Mammary epithelial cell (primary cell): ENCODE measurements at regions of chr6 and their contacts with region 1.

Region 1: DNA sequence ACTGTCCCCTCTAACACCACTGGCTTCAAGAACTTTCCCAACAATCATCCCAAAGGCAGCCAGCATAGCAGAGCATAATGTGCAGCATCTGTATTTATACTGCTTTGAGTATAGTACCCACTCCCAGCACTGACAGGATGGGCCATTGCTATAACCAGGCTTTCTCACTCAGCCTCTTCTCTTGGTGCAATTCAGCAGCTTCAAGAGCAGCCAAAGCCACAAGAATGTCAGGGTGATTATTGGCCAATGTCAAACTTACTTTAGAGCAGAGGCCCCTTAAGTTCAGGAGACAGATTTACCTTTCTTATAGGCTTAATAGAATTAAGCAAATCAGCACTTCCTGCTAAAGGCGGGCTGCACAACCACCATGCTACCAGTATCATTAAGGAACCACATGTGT is 232.4 kb upstream of the RSPO3 start:
- DNase-seq: no peak
- H3K4me3 ChIP-seq: no peak overlapping the region
- H3K27ac ChIP-seq: no peak overlapping the region
- H3K4me1 ChIP-seq: no peaks in the 10 kb centered on the region
- H3K27me3 ChIP-seq: peaks cover 5% of the 10 kb centered on the region
- CTCF ChIP-seq: no peak

Region 2: DNA sequence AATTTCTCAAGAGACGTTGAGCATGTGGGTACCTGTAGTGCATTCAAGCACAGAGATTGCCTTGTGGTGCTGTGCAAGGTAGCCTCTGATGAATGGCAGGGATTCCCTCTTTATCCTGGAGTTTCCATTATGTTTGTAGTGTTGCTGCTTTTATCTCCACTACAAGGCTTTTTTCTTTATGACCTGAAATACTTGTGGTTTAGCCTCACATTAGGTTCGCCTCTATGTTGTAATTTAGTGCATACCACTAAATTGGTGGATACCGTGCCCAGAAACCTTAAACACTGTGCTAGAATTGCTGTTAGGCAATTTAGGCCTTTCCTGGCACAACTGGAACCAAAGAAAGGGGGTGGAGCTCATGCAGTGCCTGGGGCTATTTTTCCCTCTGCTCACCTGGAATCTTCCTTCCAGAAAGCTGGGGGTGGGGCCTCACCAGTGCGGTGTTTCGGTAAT is 1018.6 kb before region 1 on chr6:
- CTCF ChIA-PET with region 1: no interaction called
- dilution Hi-C with region 1: no loop called
- in situ Hi-C with region 1: no loop called
- intact Hi-C with region 1: no loop called
- DNase-seq: peak; percentile 99
- H3K4me3 ChIP-seq: peak overlapping the region in 1 of 3 experiments; percentile 21
- H3K27ac ChIP-seq: peak overlapping the region; percentile 90
- H3K4me1 ChIP-seq: peaks cover 26% of the 10 kb centered on the region
- H3K27me3 ChIP-seq: no peaks in the 10 kb centered on the region
- CTCF ChIP-seq: no peak

Region 3: GRCh38 chr6:126824226-126824625 is 61.9 kb before region 1 on chr6:
- CTCF ChIA-PET with region 1: no interaction called
- dilution Hi-C with region 1: loop called (anchors 10 kb)
- in situ Hi-C with region 1: no loop called
- intact Hi-C with region 1: no loop called
- DNase-seq: no peak
- H3K4me3 ChIP-seq: no peak overlapping the region
- H3K27ac ChIP-seq: no peak overlapping the region
- H3K4me1 ChIP-seq: no peaks in the 10 kb centered on the region
- H3K27me3 ChIP-seq: peaks cover 2% of the 10 kb centered on the region
- CTCF ChIP-seq: no peak

Region 4: GRCh38 chr6:126897758-126898157 is 11.7 kb after region 1 on chr6:
- CTCF ChIA-PET with region 1: no interaction called
- dilution Hi-C with region 1: no loop called
- in situ Hi-C with region 1: no loop called
- intact Hi-C with region 1: no loop called
- DNase-seq: no peak
- H3K4me3 ChIP-seq: no peak overlapping the region
- H3K27ac ChIP-seq: no peak overlapping the region
- H3K4me1 ChIP-seq: no peaks in the 10 kb centered on the region
- H3K27me3 ChIP-seq: peaks cover 1% of the 10 kb centered on the region
- CTCF ChIP-seq: no peak